OCI-LY7 (cell line): ENCODE measurements at regions of chr12 and their contacts with region 1.

Region 1: DNA sequence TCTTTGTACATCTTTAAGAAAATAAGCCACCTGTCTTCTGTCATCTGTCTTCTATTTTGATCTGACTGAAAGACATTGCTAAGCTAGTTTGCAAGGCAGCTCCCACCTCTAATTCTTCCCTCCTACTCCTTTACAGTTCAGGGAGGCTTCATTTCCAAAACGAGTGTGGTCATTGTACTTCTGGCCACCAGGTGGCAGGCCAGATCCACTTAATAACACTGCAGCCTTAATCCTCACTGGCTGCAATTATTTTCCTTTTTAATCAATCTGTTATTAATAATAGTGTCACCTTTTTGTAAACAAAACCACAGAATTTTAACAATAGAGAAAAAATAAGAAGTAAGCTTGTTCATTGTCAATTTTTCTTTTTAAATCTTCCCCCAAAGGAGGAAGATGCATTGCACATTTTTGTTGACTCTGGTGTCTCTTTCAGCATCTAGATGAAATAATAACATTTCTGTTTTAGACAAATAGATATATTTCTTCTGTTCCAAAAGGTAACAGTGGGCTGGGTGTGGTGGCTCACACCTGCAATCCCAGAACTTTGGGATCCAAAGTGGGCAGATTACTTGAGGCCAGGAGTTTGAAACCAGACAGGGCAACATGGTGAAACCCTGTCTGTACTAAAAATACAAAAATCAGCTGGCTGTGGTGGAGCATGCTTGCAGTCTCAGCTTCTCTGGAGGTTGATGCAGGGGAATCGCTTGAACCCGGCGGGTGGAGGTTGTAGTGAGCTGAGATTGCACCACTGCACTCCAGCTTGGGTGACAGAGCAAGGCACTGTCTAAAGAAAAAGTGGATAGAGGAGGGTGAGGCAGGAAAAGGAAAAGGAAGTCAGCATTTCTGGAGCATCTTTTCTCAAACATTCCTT is 23.3 kb downstream of the GABARAPL1 start:
- DNase-seq: peak; percentile 79
- H3K4me3 ChIP-seq: no peak overlapping the region
- H3K27ac ChIP-seq: peak overlapping the region; percentile 35
- H3K4me1 ChIP-seq: peaks cover under 1% of the 10 kb centered on the region
- CTCF ChIP-seq: peak; percentile 99

Region 2: GRCh38 chr12:10102292-10102691 is 133.7 kb before region 1 on chr12:
- CTCF ChIA-PET with region 1: no interaction called
- POLR2A ChIA-PET with region 1: no interaction called
- intact Hi-C with region 1: no loop called
- DNase-seq: no peak
- H3K4me3 ChIP-seq: no peak overlapping the region
- H3K27ac ChIP-seq: no peak overlapping the region
- H3K4me1 ChIP-seq: no peaks in the 10 kb centered on the region
- CTCF ChIP-seq: no peak

Region 3: GRCh38 chr12:10153271-10154144 is 82.5 kb before region 1 on chr12:
- CTCF ChIA-PET with region 1: no interaction called
- POLR2A ChIA-PET with region 1: interaction called, 5 read pairs
- intact Hi-C with region 1: loop called (anchors 2 kb)
- DNase-seq: peak; percentile 78
- H3K4me3 ChIP-seq: peak overlapping the region; percentile 70
- H3K27ac ChIP-seq: no peak overlapping the region
- H3K4me1 ChIP-seq: peaks cover 15% of the 10 kb centered on the region
- CTCF ChIP-seq: peak; percentile 95

Region 4: DNA sequence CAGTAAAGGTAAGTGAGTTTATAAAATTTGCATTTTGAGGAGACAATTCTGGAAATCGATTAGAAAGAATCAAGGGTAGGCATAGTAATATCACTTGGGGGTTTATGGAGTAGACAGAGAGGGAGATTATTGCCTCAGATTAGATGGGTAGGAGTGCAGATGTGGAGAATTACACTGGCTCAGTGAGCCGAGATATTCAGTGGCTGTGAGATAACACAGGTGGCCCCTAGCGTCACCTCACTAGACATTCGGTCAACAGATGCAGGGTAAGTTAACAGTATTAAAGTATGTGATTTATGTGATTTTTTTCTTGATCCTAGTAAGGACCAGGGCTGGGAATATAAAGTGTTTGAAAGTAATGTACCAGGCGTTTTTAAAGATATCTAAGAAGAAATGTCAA is 32.0 kb after region 1 on chr12:
- CTCF ChIA-PET with region 1: no interaction called
- POLR2A ChIA-PET with region 1: no interaction called
- intact Hi-C with region 1: no loop called
- DNase-seq: peak; percentile 53
- H3K4me3 ChIP-seq: no peak overlapping the region
- H3K27ac ChIP-seq: no peak overlapping the region
- H3K4me1 ChIP-seq: peaks cover 10% of the 10 kb centered on the region
- CTCF ChIP-seq: 0 out of 2 replicates have a peak, but pooled peaks have one; percentile 26

Region 5: DNA sequence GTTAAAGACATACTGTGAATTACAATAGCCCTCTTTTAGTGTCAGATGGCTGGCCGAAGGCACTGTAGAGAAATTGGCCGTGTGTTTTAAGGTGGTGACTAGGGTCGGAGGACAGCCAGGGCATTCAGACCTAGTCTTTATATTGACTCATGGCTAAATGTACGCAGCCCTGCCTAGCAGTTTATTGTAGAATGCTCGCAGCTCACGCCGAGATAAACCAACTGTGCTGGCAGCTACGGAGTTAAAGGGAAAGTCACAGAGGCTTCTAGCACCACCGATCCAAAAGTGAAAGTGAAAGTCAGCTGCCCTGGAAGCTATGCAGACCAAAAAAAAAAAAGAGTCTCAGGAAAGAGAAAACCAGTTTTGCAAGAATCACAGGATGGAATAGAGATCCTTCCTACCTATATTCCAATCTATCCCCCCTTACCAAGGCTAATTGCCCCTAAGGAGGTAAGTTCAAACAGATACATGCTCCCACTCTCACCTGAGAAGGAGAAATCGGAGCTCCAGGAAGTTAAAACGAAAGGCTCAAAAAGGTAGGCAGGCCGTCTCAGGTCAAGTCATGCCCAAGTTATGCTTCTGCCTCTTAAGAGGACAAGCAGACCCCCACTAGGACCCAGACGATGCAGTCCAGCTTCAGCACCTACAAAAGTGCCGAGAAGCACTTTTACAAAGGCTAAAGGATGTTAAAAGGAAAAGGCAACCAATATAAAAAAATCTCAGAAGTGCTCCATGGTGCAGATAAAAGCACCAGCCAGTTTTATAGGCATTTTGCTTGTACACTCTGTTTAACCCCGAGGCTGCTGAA is 129.0 kb after region 1 on chr12:
- CTCF ChIA-PET with region 1: no interaction called
- POLR2A ChIA-PET with region 1: interaction called, 5 read pairs
- intact Hi-C with region 1: loop called (anchors 1 kb)
- DNase-seq: peak; percentile 91
- H3K4me3 ChIP-seq: peak overlapping the region; percentile 71
- H3K27ac ChIP-seq: peak overlapping the region; percentile 84
- H3K4me1 ChIP-seq: peaks cover 44% of the 10 kb centered on the region
- CTCF ChIP-seq: no peak

Region 6: GRCh38 chr12:10409387-10409786 is 173.4 kb after region 1 on chr12 and contains the start of gene KLRC4:
- CTCF ChIA-PET with region 1: no interaction called
- POLR2A ChIA-PET with region 1: no interaction called
- intact Hi-C with region 1: loop called (anchors 2 kb)
- DNase-seq: peak; percentile 92
- H3K4me3 ChIP-seq: peak within 1 kb of the TSS; percentile 73
- H3K27ac ChIP-seq: peak within 1 kb of the TSS; percentile 86
- H3K4me1 ChIP-seq: peaks cover 47% of the 10 kb centered on the region
- CTCF ChIP-seq: no peak
- total RNA-seq, gene KLRC4: 8.6 and 9.3 TPM in 2 replicates

Region 7: GRCh38 chr12:10562306-10562933 is 326.4 kb after region 1 on chr12:
- CTCF ChIA-PET with region 1: no interaction called
- POLR2A ChIA-PET with region 1: interaction called, 3 read pairs
- intact Hi-C with region 1: loop called (anchors 1 kb)
- DNase-seq: peak; percentile 76
- H3K4me3 ChIP-seq: no peak overlapping the region
- H3K27ac ChIP-seq: peak overlapping the region; percentile 98
- H3K4me1 ChIP-seq: peaks cover 50% of the 10 kb centered on the region
- CTCF ChIP-seq: peak; percentile 98

Region 8: GRCh38 chr12:10749700-10750384 is 513.8 kb after region 1 on chr12:
- CTCF ChIA-PET with region 1: no interaction called
- POLR2A ChIA-PET with region 1: no interaction called
- intact Hi-C with region 1: loop called (anchors 2 kb)
- DNase-seq: peak; percentile 87
- H3K4me3 ChIP-seq: no peak overlapping the region
- H3K27ac ChIP-seq: no peak overlapping the region
- H3K4me1 ChIP-seq: peaks cover 5% of the 10 kb centered on the region
- CTCF ChIP-seq: peak; percentile 100